HEK293 (cell line): ENCODE measurements at regions of chr7 and their contacts with region 1.

Region 1: GRCh38 chr7:101363734-101364374 is 1.2 kb downstream of the COL26A1 start:
- H3K4me3 ChIP-seq: peak overlapping the region; percentile 53
- H3K27ac ChIP-seq: peak overlapping the region; percentile 66; the same call in 1 of the 2 replicates
- H3K4me1 ChIP-seq: no peaks in the 10 kb centered on the region
- CTCF ChIP-seq: peak; percentile 90

Region 2: GRCh38 chr7:101200862-101201599 is 162.8 kb before region 1 on chr7 and contains the start of gene MOGAT3:
- CTCF ChIA-PET with region 1: no interaction called
- POLR2A ChIA-PET with region 1: no interaction called
- H3K4me3 ChIP-seq: no peak within 1 kb of the TSS
- H3K27ac ChIP-seq: no peak within 1 kb of the TSS
- H3K4me1 ChIP-seq: no peaks in the 10 kb centered on the region
- CTCF ChIP-seq: no peak

Region 3: GRCh38 chr7:101321491-101322401 is 42.1 kb before region 1 on chr7 and contains the start of gene IFT22:
- CTCF ChIA-PET with region 1: interaction called, 4 read pairs
- POLR2A ChIA-PET with region 1: interaction called, 14 read pairs
- H3K4me3 ChIP-seq: peak within 1 kb of the TSS; percentile 87
- H3K27ac ChIP-seq: peak within 1 kb of the TSS; percentile 78
- H3K4me1 ChIP-seq: no peaks in the 10 kb centered on the region
- CTCF ChIP-seq: peak; percentile 49

Region 4: DNA sequence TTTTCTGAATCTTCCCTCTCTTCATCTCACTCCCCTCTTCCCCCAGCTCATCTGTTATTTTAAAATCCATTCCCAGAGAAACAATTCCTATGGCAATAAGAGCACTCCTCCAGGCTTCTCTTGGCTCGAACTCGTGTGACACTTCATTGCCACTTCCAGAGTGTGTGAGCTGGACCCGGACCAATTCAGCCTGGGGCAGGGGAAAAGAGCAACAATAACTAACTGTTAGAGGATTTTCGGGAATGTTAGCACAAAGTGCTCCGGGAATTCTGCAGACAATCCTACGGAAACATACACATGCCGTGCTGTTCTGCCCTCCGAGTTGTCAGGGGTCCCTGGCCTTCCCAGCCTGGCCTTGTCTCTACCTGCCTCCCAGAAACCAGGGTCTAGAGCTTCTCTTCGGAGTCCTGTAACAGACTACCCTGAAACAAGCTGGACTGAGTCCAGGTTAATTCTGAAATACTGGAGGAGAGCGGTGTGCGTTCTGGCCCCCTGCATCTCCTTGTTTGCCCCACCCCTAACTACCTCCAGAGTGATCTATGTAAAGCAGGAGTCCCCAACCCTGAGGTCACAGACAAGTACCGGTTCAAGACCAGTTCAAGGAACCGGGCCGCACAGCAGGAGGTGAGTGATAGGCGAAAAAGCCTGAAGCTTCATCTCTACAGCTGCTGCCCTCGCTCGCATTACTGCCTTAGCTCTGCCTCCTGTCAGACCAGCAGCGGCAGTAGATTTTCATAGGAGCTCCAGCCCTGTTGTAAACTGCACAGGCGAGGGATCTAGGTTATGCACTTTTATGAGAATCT is 10.2 kb after region 1 on chr7:
- CTCF ChIA-PET with region 1: interaction called, 17 read pairs
- POLR2A ChIA-PET with region 1: interaction called, 4 read pairs
- H3K4me3 ChIP-seq: no peak overlapping the region
- H3K27ac ChIP-seq: no peak overlapping the region
- H3K4me1 ChIP-seq: no peaks in the 10 kb centered on the region; the same call in 1 of the 2 replicates
- CTCF ChIP-seq: no peak

Region 5: DNA sequence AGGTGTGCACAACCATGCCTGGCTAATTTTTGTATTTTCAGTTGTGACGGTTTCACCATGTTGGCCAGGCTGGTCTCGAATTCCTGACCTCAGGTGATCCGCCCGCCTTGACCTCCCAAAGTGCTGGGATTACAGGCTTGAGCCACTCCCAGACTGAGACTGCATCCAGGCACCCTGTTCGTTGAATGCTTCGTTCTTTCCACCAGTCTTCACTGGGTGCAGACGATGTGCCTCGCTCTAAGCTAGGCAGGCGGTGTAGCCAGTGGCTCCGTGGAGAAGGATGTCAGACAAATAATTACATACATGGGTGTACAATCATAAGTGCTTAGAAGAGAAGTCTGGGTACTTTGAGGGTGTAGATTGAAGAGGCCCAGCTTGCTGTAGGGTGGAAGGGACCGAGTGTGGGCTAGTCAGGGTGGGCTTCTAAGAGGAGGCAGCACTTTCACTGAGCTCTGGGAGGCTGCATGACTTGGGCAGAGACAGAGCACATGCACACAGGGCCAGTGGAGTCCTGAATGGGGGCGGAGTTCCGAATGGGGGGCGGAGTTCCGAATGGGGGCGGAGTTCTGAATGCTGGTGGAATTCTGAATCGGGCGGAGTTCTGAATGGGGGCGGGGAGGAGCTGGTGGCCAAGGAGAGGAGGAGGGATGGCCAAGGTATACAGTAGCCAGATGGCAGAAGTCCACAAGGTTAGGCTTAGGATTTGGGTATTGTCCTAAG is 73.2 kb after region 1 on chr7:
- CTCF ChIA-PET with region 1: interaction called, 12 read pairs
- POLR2A ChIA-PET with region 1: no interaction called
- H3K4me3 ChIP-seq: no peak overlapping the region
- H3K27ac ChIP-seq: no peak overlapping the region
- H3K4me1 ChIP-seq: no peaks in the 10 kb centered on the region
- CTCF ChIP-seq: no peak

Region 6: DNA sequence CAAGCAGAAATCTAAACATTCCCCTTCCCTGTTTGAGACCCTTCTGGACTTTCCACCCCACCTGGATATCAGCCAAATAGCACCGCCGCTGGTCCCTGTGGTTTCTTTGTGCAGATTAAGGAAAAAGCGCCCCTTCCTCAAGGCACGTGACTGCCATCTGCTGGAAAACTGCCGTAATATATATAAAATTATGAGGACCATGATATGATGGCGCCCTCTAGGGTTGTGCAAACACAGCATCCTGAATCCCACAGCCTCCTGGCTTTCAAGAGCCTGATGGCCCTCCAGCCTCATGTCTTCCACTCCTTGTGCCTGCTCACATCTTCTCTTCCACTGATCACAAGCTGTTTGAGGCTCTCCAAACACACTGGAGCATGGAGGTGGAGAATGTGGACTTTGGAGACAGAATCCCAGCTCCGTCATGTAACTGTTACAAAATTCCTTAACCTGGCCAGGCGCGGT is 144.0 kb after region 1 on chr7:
- CTCF ChIA-PET with region 1: interaction called, 12 read pairs
- POLR2A ChIA-PET with region 1: no interaction called
- H3K4me3 ChIP-seq: no peak overlapping the region
- H3K27ac ChIP-seq: no peak overlapping the region
- H3K4me1 ChIP-seq: no peaks in the 10 kb centered on the region
- CTCF ChIP-seq: peak; percentile 94